ENCODE measurements at regions of chr18 and their contacts with region 1.

Region 1: GRCh38 chr18:12726774-12727550 is 24.1 kb downstream of the PSMG2 start:
- DNase-seq: peak; percentile 24 to 75 (median 62)
- ATAC-seq: peak; percentile 79
- H3K4me3 ChIP-seq: no peak overlapping the region
- H3K4me3 Mint-ChIP-seq: no peak overlapping the region
- H3K27ac ChIP-seq: no peak overlapping the region
- H3K27ac Mint-ChIP-seq: peak overlapping the region in 6 of 9 donors; percentile 13 to 81 (median 54)
- H3K4me1 ChIP-seq: no peaks in the 10 kb centered on the region
- H3K4me1 Mint-ChIP-seq: peaks cover 2 to 9% (median 2%) of the 10 kb centered on the region in 7 donors
- H3K27me3 ChIP-seq: no peaks in the 10 kb centered on the region
- H3K27me3 Mint-ChIP-seq: no peaks in the 10 kb centered on the region

Region 2: DNA sequence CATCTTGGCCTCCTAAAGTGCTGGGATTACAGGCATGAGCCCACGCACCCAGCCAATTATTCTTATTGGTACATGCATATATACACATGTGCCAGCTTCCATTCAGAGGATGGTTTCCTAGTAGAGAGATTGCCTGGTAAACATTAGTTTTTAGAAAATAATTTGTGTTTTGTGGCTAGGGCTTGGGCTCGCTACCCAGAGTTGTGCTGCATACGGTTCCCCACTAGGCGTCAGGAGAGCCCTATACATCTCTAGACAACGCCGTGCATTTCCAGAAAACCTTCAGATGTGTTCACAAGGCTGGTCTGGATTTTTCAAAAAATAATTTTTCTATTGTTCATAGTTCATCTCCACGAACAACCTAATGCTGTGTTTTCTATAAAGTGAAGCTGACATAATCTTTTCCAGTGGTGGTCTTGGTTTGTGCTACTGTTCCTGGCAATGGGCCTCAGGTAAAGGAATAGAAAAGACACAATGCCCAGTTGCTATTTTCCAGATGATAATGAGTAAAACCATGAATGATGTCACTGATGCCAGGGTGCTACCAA is 335.3 kb before region 1 on chr18:
- CTCF ChIA-PET with region 1: interaction called, 5 read pairs
- POLR2A ChIA-PET with region 1: no interaction called
- intact Hi-C with region 1: loop called in 1 of 2 experiments (anchors 2 kb)
- DNase-seq: peak in 8 of 9 donors; percentile 16 to 59 (median 44)
- ATAC-seq: peak; percentile 96
- H3K4me3 ChIP-seq: no peak overlapping the region
- H3K4me3 Mint-ChIP-seq: no peak overlapping the region
- H3K27ac ChIP-seq: no peak overlapping the region
- H3K27ac Mint-ChIP-seq: no peak overlapping the region
- H3K4me1 ChIP-seq: no peaks in the 10 kb centered on the region
- H3K4me1 Mint-ChIP-seq: peaks cover 0 to 3% (median 0%) of the 10 kb centered on the region in 7 donors
- H3K27me3 ChIP-seq: no peaks in the 10 kb centered on the region
- H3K27me3 Mint-ChIP-seq: peaks cover 0 to 9% (median 5%) of the 10 kb centered on the region in 5 donors

Region 3: GRCh38 chr18:12543697-12544096 is 183.3 kb before region 1 on chr18:
- CTCF ChIA-PET with region 1: no interaction called
- POLR2A ChIA-PET with region 1: no interaction called
- intact Hi-C with region 1: no loop called
- DNase-seq: no peak
- ATAC-seq: no peak
- H3K4me3 ChIP-seq: no peak overlapping the region
- H3K4me3 Mint-ChIP-seq: no peak overlapping the region
- H3K27ac ChIP-seq: no peak overlapping the region
- H3K27ac Mint-ChIP-seq: no peak overlapping the region
- H3K4me1 ChIP-seq: no peaks in the 10 kb centered on the region
- H3K4me1 Mint-ChIP-seq: peaks cover 0 to 13% (median 0%) of the 10 kb centered on the region in 7 donors
- H3K27me3 ChIP-seq: no peaks in the 10 kb centered on the region
- H3K27me3 Mint-ChIP-seq: peaks cover 0 to 23% (median 0%) of the 10 kb centered on the region in 5 donors

Region 4: DNA sequence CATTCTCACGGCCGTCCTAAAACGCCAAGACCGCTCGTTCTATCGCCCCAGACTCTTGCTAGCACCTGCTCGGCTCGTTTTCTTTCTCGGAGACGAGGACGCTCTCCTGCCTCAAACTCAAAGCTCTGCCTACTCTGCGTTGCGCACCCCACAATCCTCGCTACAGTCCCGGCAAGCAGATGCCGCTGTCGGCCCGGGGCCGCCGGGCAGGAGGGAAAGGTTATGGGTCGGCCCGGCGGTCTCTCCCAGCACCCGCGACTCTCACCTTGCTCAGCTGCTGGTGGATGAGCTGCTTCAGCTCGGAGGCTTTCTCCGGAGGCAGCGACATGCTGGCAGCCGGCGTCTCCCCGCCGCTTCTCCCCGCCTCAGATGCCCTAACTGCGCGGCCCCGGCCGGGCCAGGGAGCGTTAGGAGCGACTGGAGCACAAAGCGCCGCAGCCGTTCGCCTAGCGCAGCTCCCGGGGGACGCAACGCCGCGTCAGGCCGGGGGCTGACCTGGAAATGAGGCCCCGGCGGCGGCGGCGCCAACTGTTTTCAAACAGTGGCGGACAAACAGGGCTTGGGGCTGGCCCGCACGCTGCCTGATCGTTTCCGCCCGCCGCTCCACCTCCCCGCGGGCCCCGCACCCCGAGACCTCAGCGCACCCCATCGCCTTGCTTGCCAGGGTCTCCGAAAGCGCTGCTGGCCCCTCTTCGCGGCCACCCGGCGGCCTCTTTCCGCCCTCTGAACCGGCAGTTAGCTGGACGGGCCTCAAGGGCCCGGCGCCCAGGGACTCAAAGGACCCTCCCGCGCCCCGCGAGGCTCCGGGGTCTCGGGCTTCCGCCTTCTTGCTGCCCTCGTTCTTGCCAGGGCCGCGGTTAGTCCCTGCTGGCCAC is 24.5 kb before region 1 on chr18 and contains the starts of genes CEP76 and PSMG2:
- CTCF ChIA-PET with region 1: interaction called, 4 read pairs
- POLR2A ChIA-PET with region 1: no interaction called
- intact Hi-C with region 1: loop called in 1 of 2 experiments (anchors 2 kb)
- DNase-seq: peak; percentile 77 to 88 (median 84)
- ATAC-seq: peak; percentile 89
- H3K4me3 ChIP-seq: peak within 1 kb of the TSS; percentile 97
- H3K4me3 Mint-ChIP-seq: peak within 1 kb of the TSS; percentile 92 to 99 (median 98)
- H3K27ac ChIP-seq: peak within 1 kb of the TSS; percentile 96
- H3K27ac Mint-ChIP-seq: peak within 1 kb of the TSS; percentile 91 to 100 (median 96)
- H3K4me1 ChIP-seq: peaks cover 17 to 20% of the 10 kb centered on the region in 2 donors
- H3K4me1 Mint-ChIP-seq: peaks cover 36 to 63% (median 50%) of the 10 kb centered on the region in 7 donors
- H3K27me3 ChIP-seq: no peaks in the 10 kb centered on the region
- H3K27me3 Mint-ChIP-seq: no peaks in the 10 kb centered on the region
- total RNA-seq, gene CEP76: 6.9 to 13.2 (median 11.1) TPM
- total RNA-seq, gene PSMG2: 49.9 to 104 (median 59.9) TPM

Region 5: DNA sequence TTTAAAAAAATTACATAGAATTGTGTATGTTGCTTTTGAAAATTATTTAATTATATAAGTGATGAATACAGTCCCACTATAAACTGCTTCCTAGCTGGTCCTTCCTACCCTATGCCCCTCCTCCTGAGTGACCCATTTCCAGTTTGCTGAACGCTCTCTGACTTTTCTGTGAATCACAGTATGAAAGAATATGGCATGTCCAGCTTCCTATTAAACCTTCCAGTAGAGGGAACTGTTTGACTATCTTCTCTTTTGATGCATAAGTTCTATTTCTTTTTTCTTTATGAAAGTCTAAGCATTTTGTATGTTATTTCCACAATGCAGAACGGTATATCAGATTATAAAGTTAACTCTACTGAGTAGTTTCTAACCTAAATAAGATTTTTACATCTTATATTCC is 17.1 kb after region 1 on chr18:
- CTCF ChIA-PET with region 1: interaction called, 3 read pairs
- POLR2A ChIA-PET with region 1: no interaction called
- intact Hi-C with region 1: loop called (anchors 1 to 2 kb)
- DNase-seq: peak in 5 of 9 donors; percentile 13 to 38 (median 22)
- ATAC-seq: peak; percentile 68
- H3K4me3 ChIP-seq: no peak overlapping the region
- H3K4me3 Mint-ChIP-seq: no peak overlapping the region
- H3K27ac ChIP-seq: no peak overlapping the region
- H3K27ac Mint-ChIP-seq: no peak overlapping the region
- H3K4me1 ChIP-seq: no peaks in the 10 kb centered on the region
- H3K4me1 Mint-ChIP-seq: peaks cover 0 to 6% (median 5%) of the 10 kb centered on the region in 7 donors
- H3K27me3 ChIP-seq: no peaks in the 10 kb centered on the region
- H3K27me3 Mint-ChIP-seq: no peaks in the 10 kb centered on the region

Region 6: GRCh38 chr18:12890506-12890905 is 163.5 kb after region 1 on chr18:
- CTCF ChIA-PET with region 1: interaction called, 4 read pairs
- POLR2A ChIA-PET with region 1: no interaction called
- intact Hi-C with region 1: loop called (anchors 1 kb)
- DNase-seq: no peak
- ATAC-seq: no peak
- H3K4me3 ChIP-seq: no peak overlapping the region
- H3K4me3 Mint-ChIP-seq: no peak overlapping the region
- H3K27ac ChIP-seq: no peak overlapping the region
- H3K27ac Mint-ChIP-seq: no peak overlapping the region
- H3K4me1 ChIP-seq: no peaks in the 10 kb centered on the region
- H3K4me1 Mint-ChIP-seq: peaks cover 0 to 27% (median 13%) of the 10 kb centered on the region in 7 donors
- H3K27me3 ChIP-seq: peaks cover 0 to under 1% of the 10 kb centered on the region in 2 donors
- H3K27me3 Mint-ChIP-seq: peaks cover 7 to 16% (median 12%) of the 10 kb centered on the region in 5 donors

Region 7: GRCh38 chr18:12934454-12935071 is 207.6 kb after region 1 on chr18:
- CTCF ChIA-PET with region 1: interaction called, 62 read pairs
- POLR2A ChIA-PET with region 1: interaction called, 6 read pairs
- intact Hi-C with region 1: loop called (anchors 1 kb)
- DNase-seq: peak; percentile 53 to 79 (median 71)
- ATAC-seq: peak; percentile 92
- H3K4me3 ChIP-seq: no peak overlapping the region
- H3K4me3 Mint-ChIP-seq: peak overlapping the region in 2 of 10 donors; percentile 38 to 41
- H3K27ac ChIP-seq: no peak overlapping the region
- H3K27ac Mint-ChIP-seq: peak overlapping the region in 2 of 9 donors; percentile 17 to 21
- H3K4me1 ChIP-seq: peaks cover 0 to 6% of the 10 kb centered on the region in 2 donors
- H3K4me1 Mint-ChIP-seq: peaks cover 0 to 5% (median 4%) of the 10 kb centered on the region in 7 donors
- H3K27me3 ChIP-seq: no peaks in the 10 kb centered on the region
- H3K27me3 Mint-ChIP-seq: peaks cover 3 to 16% (median 8%) of the 10 kb centered on the region in 5 donors

Region 8: DNA sequence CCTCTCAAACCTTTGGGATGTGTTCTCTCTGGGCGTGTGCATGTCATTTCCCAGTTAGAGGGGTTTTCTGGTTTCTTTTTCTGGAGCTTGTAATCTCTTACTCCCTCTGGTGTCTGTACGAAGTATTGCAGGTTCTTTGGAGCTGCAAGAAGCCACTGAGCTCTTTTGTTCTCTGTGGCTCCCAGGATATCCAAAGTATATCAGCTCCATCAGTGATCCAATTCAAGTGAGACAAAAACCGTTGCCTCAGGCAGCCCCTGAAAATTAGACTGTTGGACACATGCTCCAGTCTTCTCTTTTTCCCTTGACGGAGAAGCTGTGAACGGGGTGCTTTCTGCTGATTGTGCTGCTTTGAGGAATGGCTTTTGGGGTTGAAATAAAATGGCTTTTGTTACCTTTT is 432.6 kb after region 1 on chr18:
- CTCF ChIA-PET with region 1: interaction called, 6 read pairs
- POLR2A ChIA-PET with region 1: interaction called, 4 read pairs
- intact Hi-C with region 1: loop called (anchors 1 to 2 kb)
- DNase-seq: peak in 7 of 9 donors; percentile 32 to 66 (median 56)
- ATAC-seq: peak; percentile 79
- H3K4me3 ChIP-seq: no peak overlapping the region
- H3K4me3 Mint-ChIP-seq: peak overlapping the region in 4 of 10 donors; percentile 1 to 52 (median 8)
- H3K27ac ChIP-seq: no peak overlapping the region
- H3K27ac Mint-ChIP-seq: peak overlapping the region in 1 of 9 donors; percentile 43
- H3K4me1 ChIP-seq: no peaks in the 10 kb centered on the region
- H3K4me1 Mint-ChIP-seq: peaks cover 0 to 5% (median 3%) of the 10 kb centered on the region in 7 donors
- H3K27me3 ChIP-seq: no peaks in the 10 kb centered on the region
- H3K27me3 Mint-ChIP-seq: peaks cover 0 to 18% (median 4%) of the 10 kb centered on the region in 5 donors

Measured in naive thymus-derived CD4-positive, alpha-beta T cell (primary cell).